Activated CD4-positive, alpha-beta T cell treated with anti-CD3 and anti-CD28 coated beads, Interleukin-2, amount 10 ng/mL, durations not matched to agents 24 days and 14 days (primary cell): ENCODE measurements at regions of chr11 and their contacts with region 1.

Region 1: DNA sequence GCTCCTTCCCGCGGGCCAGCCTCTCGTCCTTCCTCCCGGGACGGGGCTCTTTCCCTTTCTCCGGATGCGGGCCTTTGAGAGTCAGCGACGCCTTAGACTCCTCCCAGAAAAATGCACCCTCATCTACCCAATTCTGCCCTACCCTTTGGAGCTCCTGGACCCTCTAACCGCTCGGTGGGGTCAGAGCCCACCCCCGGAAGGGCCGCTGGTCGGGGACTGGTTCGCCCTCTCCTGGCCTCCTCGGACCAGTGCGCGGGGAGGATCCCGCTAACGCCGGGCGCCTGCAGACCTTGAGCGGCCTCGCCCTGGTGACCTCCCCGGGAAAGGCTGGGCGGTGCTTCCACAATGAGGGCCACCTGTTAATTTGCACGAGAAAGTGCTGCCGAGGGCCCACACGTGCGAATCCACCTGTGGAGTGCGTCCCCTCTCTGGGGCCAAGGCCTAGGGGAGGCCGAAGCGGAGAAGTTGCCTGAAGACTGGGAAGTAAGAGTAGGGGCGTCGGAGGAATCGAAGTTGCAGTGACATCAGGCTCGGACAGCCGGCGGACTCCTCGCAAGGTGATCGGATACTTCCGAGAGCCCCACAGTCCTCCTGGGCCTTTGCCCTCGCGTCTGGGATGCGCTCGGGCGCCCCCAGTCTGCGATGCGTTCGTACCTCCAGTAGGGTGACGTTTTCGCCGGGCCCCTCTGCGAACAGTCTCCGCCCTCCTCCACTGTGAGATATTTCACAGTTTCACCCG is 61.5 kb downstream of the ENDOD1 start:
- DNase-seq: peak; percentile 97
- H3K4me3 Mint-ChIP-seq: peak overlapping the region; percentile 88
- H3K27ac Mint-ChIP-seq: peak overlapping the region; percentile 91
- H3K4me1 Mint-ChIP-seq: peaks cover 50% of the 10 kb centered on the region
- H3K27me3 Mint-ChIP-seq: no peaks in the 10 kb centered on the region

Region 2: DNA sequence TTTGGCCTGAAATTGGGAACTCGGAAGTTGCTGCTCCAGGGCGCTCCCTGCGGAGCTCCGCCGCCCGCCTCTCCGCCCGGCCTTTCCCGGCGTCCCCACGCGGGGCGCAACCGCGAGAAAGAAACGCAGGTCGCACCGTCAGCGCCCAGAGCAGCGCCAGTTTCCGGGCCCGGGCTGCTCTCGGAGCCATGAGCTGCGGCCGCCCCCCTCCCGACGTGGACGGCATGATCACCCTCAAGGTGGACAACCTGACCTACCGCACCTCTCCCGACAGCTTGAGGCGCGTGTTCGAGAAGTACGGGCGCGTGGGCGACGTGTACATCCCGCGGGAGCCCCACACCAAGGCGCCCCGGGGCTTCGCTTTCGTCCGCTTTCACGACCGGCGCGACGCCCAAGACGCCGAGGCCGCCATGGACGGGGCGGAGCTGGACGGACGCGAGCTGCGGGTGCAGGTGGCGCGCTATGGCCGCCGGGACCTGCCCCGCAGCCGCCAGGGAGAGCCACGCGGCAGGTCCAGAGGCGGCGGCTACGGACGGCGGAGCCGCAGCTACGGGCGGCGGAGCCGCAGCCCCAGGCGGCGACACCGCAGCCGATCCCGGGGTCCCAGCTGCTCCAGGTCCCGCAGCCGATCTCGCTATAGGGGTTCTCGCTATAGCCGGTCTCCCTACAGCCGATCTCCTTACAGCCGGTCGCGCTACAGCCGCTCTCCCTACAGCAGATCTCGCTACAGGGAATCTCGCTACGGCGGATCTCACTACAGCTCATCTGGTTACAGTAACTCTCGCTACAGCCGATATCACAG is 83.9 kb before region 1 on chr11:
- intact Hi-C with region 1: loop called (anchors 1 kb)
- DNase-seq: peak; percentile 93
- H3K4me3 Mint-ChIP-seq: peak overlapping the region; percentile 98
- H3K27ac Mint-ChIP-seq: peak overlapping the region; percentile 98
- H3K4me1 Mint-ChIP-seq: peaks cover 18% of the 10 kb centered on the region
- H3K27me3 Mint-ChIP-seq: peaks cover 18% of the 10 kb centered on the region

Region 3: DNA sequence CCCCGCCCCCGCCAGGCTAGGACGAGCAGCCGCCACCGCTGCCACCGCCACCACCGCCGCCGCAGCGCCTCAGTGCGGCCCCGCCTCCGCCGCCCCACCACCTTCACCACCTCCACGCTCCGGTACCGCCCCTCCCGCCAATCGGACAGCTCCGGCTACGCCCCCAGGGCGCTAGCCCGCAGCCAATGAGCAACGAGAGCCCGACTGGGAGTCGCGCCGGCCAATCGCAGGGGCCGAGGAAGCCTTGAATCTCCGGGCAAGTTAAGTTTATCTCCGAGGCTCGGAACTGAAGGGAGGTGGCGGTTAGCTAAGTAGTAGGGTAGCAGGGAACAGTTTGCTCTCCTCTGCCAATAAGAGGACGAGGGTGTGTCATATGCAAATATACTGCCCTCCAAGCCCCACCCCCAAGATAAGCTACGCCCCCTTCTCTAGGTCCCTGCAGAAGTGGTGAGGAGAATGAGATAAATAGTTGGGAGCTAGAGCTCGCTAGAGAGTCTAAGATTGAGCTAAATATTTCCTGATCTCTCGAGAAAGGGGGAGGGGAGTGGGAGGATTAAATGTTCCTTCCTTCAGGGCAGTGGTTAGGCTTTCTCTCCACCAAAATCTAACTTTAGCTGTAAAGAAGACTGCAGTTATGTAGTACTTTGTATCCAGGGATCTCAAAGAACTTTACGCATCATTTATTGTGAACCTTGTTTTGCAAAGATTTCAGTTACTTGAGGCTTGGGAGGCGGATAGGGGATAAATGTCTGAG is 80.2 kb after region 1 on chr11 and contains the start of gene SESN3:
- intact Hi-C with region 1: loop called (anchors 1 kb)
- DNase-seq: peak; percentile 100
- H3K4me3 Mint-ChIP-seq: no peak within 1 kb of the TSS
- H3K27ac Mint-ChIP-seq: peak within 1 kb of the TSS; percentile 92
- H3K4me1 Mint-ChIP-seq: peaks cover 28% of the 10 kb centered on the region
- H3K27me3 Mint-ChIP-seq: no peaks in the 10 kb centered on the region
- total RNA-seq, gene SESN3: 63.4 and 64.2 TPM in 2 replicates

Region 4: GRCh38 chr11:95599959-95600586 is 449.0 kb after region 1 on chr11:
- intact Hi-C with region 1: loop called (anchors 10 kb)
- DNase-seq: peak; percentile 66
- H3K4me3 Mint-ChIP-seq: no peak overlapping the region
- H3K27ac Mint-ChIP-seq: peak overlapping the region; percentile 35
- H3K4me1 Mint-ChIP-seq: peaks cover 19% of the 10 kb centered on the region
- H3K27me3 Mint-ChIP-seq: no peaks in the 10 kb centered on the region

Region 5: GRCh38 chr11:95790123-95790932 is 639.2 kb after region 1 on chr11 and contains the start of gene CEP57:
- intact Hi-C with region 1: loop called (anchors 1 kb)
- DNase-seq: peak; percentile 98
- H3K4me3 Mint-ChIP-seq: peak within 1 kb of the TSS; percentile 98
- H3K27ac Mint-ChIP-seq: peak within 1 kb of the TSS; percentile 100
- H3K4me1 Mint-ChIP-seq: peaks cover 45% of the 10 kb centered on the region
- H3K27me3 Mint-ChIP-seq: no peaks in the 10 kb centered on the region
- total RNA-seq, gene CEP57: 75.7 and 87.6 TPM in 2 replicates